Activated naive CD4-positive, alpha-beta T cell treated with anti-CD3 and anti-CD28 coated beads for 36 hours (primary cell): ENCODE measurements at regions of chr2 and their contacts with region 1.

Region 1: GRCh38 chr2:112749755-112750559 is 14.5 kb downstream of the CKAP2L start:
- DNase-seq: peak; percentile 90
- H3K4me3 Mint-ChIP-seq: no peak overlapping the region
- H3K27ac Mint-ChIP-seq: no peak overlapping the region
- H3K4me1 Mint-ChIP-seq: peaks cover 10% of the 10 kb centered on the region
- H3K27me3 Mint-ChIP-seq: no peaks in the 10 kb centered on the region

Region 2: GRCh38 chr2:112674229-112674628 is 75.7 kb before region 1 on chr2:
- CTCF ChIA-PET with region 1: no interaction called
- intact Hi-C with region 1: no loop called
- DNase-seq: no peak
- H3K4me3 Mint-ChIP-seq: no peak overlapping the region
- H3K27ac Mint-ChIP-seq: no peak overlapping the region
- H3K4me1 Mint-ChIP-seq: peaks cover 1% of the 10 kb centered on the region
- H3K27me3 Mint-ChIP-seq: no peaks in the 10 kb centered on the region

Region 3: DNA sequence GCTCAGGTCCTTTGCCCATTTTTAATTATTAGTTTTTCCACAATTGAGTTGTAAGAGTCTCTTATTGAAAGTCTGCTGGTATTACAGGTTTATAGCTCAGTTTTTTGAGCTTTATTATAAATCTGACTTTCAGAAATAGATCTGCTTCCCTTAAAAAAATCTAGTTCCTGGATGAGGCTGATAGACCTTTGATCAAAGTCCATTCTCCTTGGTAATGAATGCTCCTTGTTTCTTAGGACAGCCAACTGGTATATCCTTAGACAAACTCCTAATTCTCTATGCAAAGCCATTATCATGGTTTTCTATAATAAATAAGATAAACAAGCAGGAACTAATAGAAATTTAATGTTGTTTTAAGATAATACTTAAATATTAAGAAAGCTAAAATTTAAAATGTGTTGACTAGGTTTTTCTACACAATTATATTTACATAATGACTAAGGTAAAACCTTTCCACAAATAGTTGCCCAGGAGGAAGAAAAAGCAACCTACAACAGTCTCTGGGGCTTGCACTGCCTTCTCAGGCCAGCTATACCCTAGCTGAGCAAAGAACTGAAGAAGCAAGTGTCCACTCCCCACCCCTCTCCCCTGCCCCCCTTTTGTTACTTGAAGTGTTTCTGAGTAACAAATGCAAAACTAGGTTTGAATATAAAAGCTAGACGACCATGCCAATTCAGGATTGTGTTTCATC is 12.3 kb before region 1 on chr2:
- CTCF ChIA-PET with region 1: interaction called, 28 read pairs
- intact Hi-C with region 1: no loop called
- DNase-seq: no peak
- H3K4me3 Mint-ChIP-seq: no peak overlapping the region
- H3K27ac Mint-ChIP-seq: no peak overlapping the region
- H3K4me1 Mint-ChIP-seq: no peaks in the 10 kb centered on the region
- H3K27me3 Mint-ChIP-seq: no peaks in the 10 kb centered on the region

Region 4: GRCh38 chr2:112891385-112891831 is 141.5 kb after region 1 on chr2:
- CTCF ChIA-PET with region 1: interaction called, 118 read pairs
- intact Hi-C with region 1: no loop called
- DNase-seq: no peak
- H3K4me3 Mint-ChIP-seq: no peak overlapping the region
- H3K27ac Mint-ChIP-seq: no peak overlapping the region
- H3K4me1 Mint-ChIP-seq: no peaks in the 10 kb centered on the region
- H3K27me3 Mint-ChIP-seq: no peaks in the 10 kb centered on the region

Region 5: GRCh38 chr2:112958428-112959108 is 208.6 kb after region 1 on chr2:
- CTCF ChIA-PET with region 1: interaction called, 7 read pairs
- intact Hi-C with region 1: loop called (anchors 1 kb)
- DNase-seq: peak; percentile 54
- H3K4me3 Mint-ChIP-seq: no peak overlapping the region
- H3K27ac Mint-ChIP-seq: no peak overlapping the region
- H3K4me1 Mint-ChIP-seq: no peaks in the 10 kb centered on the region
- H3K27me3 Mint-ChIP-seq: no peaks in the 10 kb centered on the region